Activated CD8-positive, alpha-beta T cell treated with anti-CD3 and anti-CD28 coated beads, Interleukin-2, amount 10 ng/mL, durations not matched to agents 7 days and 5 days (primary cell): ENCODE measurements at regions of chr12 and their contacts with region 1.

Region 1: DNA sequence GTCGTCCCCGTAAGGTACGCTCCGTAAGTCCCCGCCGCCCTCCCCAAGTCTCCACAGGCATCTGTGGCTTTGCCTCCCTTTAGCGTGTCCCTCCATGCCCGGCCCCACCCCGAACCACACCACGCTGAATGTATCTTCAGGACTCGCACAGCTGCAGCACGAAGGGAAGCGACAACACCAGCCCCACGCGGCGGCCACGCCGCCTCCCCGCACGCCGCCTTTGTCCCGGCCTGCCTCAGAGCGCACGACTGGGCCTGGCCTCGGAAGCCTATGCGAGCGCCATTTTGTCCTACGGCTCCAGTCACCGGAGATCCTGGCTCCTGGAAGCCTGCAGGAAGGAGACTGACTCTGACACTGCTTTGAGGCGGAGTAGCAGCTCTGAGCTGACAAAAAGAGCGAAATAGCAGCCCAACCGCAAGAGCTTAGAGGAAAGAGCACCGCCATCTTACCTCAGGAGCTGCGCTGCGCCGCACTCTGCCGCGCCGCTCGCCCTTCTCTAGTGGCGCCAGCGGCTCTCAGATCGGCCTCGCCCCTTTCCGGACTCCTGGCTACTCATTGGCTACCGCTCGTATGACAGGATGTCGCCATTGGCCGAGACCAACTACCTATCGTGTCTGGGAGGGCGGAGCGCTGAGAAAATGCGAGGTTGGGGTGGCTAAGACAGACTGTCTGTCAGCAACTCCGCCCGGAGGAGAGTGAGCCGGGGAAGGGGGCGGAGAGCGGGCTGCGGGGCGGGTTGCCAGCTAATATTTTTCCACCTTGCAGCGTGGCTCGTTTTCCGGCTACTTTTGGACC is at the start of gene KANSL2:
- DNase-seq: peak; percentile 99
- ATAC-seq: peak; percentile 97
- H3K4me3 Mint-ChIP-seq: peak within 1 kb of the TSS; percentile 99
- H3K27ac Mint-ChIP-seq: peak within 1 kb of the TSS; percentile 99
- H3K4me1 Mint-ChIP-seq: peaks cover 45% of the 10 kb centered on the region
- H3K27me3 Mint-ChIP-seq: no peaks in the 10 kb centered on the region
- total RNA-seq, gene KANSL2: 51.3 to 54.3 TPM

Region 2: GRCh38 chr12:48482198-48482597 is 199.7 kb before region 1 on chr12 and contains the start of gene C12orf54:
- CTCF ChIA-PET with region 1: no interaction called
- POLR2A ChIA-PET with region 1: no interaction called
- DNase-seq: no peak
- ATAC-seq: no peak
- H3K4me3 Mint-ChIP-seq: no peak within 1 kb of the TSS
- H3K27ac Mint-ChIP-seq: no peak within 1 kb of the TSS
- H3K4me1 Mint-ChIP-seq: no peaks in the 10 kb centered on the region
- H3K27me3 Mint-ChIP-seq: peaks cover 5% of the 10 kb centered on the region
- total RNA-seq, gene C12orf54: not detected

Region 3: DNA sequence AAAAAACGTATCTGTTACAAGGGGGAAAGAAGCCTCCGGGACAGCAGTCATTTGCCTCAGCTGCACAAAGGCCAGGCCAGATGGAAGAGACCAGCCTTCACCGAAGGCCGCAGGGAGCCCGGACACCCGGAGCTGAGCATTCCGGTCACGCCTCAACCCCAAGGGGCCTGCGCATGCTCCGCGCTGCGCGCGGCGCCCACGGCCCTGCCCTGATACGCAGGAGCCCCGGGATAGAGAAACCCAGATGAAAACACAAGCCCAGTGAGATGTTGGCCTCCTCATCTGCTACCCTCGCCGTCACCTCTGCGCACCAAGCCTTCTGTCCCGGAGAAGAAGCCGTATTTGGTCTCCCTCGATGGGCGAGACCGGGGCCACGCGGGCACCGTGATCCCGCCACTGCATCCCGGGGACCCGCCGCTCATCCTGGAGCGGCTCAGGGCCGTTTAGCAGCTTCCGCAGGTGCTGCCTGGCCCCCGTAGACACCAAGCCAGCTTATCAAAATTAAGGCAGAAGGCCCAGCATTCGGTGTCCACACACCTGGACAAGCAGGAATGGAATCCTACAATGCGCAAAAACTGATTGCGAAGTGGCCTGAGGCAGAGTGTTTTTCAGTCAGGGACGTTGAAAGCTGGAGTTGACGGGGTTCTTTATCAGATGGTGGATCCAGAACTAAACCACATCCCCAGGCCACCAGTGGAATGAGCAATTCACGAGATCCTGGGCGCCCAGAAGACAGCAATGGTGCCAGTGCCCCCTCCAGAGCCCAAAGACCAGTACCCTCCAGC is 153.9 kb before region 1 on chr12:
- CTCF ChIA-PET with region 1: no interaction called
- POLR2A ChIA-PET with region 1: no interaction called
- DNase-seq: no peak
- ATAC-seq: no peak
- H3K4me3 Mint-ChIP-seq: no peak overlapping the region
- H3K27ac Mint-ChIP-seq: no peak overlapping the region
- H3K4me1 Mint-ChIP-seq: peaks cover 10% of the 10 kb centered on the region
- H3K27me3 Mint-ChIP-seq: no peaks in the 10 kb centered on the region

Region 4: DNA sequence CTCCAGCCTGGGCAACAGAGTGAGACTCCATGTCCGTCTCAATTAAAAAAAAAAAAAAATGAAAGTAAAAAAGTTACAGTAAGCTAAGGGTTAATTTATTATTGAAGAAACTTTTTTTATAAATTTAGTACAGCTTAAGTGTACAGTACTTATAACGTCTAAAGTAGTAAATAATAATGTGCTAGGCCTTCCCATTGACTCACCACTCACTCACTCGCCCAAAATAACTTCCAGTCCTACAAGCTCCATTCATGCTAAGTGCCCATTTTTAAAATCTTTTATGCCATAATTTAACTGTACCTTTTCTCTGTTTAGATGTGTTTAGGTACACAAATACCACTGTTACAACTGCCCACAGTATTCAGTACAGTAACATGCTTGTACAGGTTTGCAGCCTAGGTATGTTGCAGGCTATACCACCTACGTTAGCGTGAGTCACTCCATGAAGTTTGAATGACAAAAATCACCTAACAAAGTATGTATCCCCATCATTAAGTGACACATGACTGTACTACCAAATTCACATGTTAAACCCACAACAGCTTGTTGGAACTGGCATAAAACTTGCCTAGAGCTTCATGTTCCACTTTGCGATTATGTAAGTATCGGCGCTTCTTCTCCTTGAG is 10.6 kb before region 1 on chr12:
- CTCF ChIA-PET with region 1: interaction called, 3 read pairs
- POLR2A ChIA-PET with region 1: interaction called, 18 read pairs
- DNase-seq: no peak
- ATAC-seq: peak; percentile 20
- H3K4me3 Mint-ChIP-seq: no peak overlapping the region
- H3K27ac Mint-ChIP-seq: no peak overlapping the region
- H3K4me1 Mint-ChIP-seq: peaks cover 3% of the 10 kb centered on the region
- H3K27me3 Mint-ChIP-seq: no peaks in the 10 kb centered on the region